ENCODE measurements at regions of chr20 and their contacts with region 1.

Region 1: GRCh38 chr20:36093025-36093803 is 61.3 kb upstream of the EPB41L1 start:
- DNase-seq: peak; percentile 77 to 83
- H3K4me3 ChIP-seq: peak overlapping the region; percentile 86
- H3K4me3 Mint-ChIP-seq: peak overlapping the region; percentile 93
- H3K27ac Mint-ChIP-seq: peak overlapping the region; percentile 82
- H3K4me1 ChIP-seq: peaks cover 60% of the 10 kb centered on the region
- H3K4me1 Mint-ChIP-seq: peaks cover 43% of the 10 kb centered on the region
- H3K27me3 ChIP-seq: no peaks in the 10 kb centered on the region
- H3K27me3 Mint-ChIP-seq: no peaks in the 10 kb centered on the region
- CTCF ChIP-seq: no peak

Region 2: DNA sequence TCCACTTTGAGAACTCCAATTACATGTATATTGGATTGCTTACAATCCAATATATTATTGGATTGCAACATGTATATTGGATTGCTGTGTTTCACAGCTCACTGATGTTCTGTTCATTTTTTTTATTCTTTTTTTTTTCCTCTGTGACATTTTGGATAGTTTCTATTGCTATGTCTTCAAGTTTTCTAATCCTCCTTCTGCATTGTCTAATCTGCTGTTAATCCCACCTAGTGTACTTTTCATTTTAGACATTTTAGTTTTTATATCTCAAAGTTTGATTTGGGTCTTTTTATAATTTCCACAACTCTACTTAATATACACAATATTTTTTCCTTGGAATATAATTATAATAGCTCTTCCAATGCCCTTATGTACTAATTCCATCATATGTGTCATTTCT is 90.4 kb before region 1 on chr20:
- CTCF ChIA-PET with region 1: no interaction called
- POLR2A ChIA-PET with region 1: no interaction called
- intact Hi-C with region 1: no loop called
- DNase-seq: no peak
- H3K4me3 ChIP-seq: no peak overlapping the region
- H3K4me3 Mint-ChIP-seq: no peak overlapping the region
- H3K27ac Mint-ChIP-seq: no peak overlapping the region
- H3K4me1 ChIP-seq: no peaks in the 10 kb centered on the region
- H3K4me1 Mint-ChIP-seq: no peaks in the 10 kb centered on the region
- H3K27me3 ChIP-seq: no peaks in the 10 kb centered on the region
- H3K27me3 Mint-ChIP-seq: no peaks in the 10 kb centered on the region
- CTCF ChIP-seq: no peak

Region 3: GRCh38 chr20:36030149-36030548 is 63.1 kb before region 1 on chr20:
- CTCF ChIA-PET with region 1: no interaction called
- POLR2A ChIA-PET with region 1: no interaction called
- intact Hi-C with region 1: loop called (anchors 5 kb)
- DNase-seq: no peak
- H3K4me3 ChIP-seq: no peak overlapping the region
- H3K4me3 Mint-ChIP-seq: no peak overlapping the region
- H3K27ac Mint-ChIP-seq: no peak overlapping the region
- H3K4me1 ChIP-seq: no peaks in the 10 kb centered on the region
- H3K4me1 Mint-ChIP-seq: peaks cover 13% of the 10 kb centered on the region
- H3K27me3 ChIP-seq: no peaks in the 10 kb centered on the region
- H3K27me3 Mint-ChIP-seq: no peaks in the 10 kb centered on the region
- CTCF ChIP-seq: no peak

Region 4: DNA sequence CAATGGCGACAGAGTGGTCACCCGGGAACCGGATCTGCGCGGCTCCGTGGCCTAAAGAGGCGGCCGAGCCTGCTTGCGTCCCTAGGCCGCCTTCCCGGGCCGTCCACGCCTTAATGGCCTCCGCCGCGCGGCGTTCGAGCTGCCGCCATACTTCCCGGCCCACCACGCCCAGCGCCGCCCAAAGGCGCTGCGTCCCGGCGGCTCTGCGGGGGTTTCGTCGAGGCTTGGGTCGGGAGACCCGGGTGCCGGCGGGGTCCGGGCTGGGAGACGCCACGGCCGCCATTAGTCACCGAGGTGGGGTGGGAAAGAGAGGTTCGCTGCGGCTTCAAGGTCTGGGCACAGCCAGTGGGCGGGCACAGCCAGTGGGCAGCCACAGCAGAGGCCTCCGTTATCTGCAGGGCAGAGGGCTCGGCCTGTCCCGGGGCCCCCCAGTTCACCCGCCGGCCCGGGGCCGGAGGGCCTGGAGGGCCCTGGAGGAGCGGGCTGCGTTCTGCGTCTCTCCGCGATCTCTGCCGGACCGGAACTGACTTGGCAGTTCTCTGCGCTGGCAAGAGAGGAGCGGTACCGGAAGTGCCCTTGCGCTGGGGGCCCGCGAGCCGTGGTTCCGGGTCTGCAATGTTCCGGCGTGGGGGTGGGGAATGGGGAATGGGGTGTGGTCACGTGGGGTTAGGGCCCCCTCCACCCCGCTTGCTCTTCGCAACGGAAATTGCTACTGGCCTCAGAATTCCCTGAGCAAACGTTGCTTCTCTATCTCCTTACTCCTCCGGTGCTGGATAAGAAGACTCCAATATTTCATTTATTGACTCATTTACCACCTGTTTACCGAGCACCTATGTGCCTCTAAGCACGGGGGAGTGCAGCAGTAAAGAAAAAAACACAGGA is 42.5 kb before region 1 on chr20:
- CTCF ChIA-PET with region 1: no interaction called
- POLR2A ChIA-PET with region 1: interaction called, 7 read pairs
- intact Hi-C with region 1: loop called (anchors 2 kb)
- DNase-seq: peak; percentile 99
- H3K4me3 ChIP-seq: peak overlapping the region; percentile 67
- H3K4me3 Mint-ChIP-seq: peak overlapping the region; percentile 69
- H3K27ac Mint-ChIP-seq: peak overlapping the region; percentile 88
- H3K4me1 ChIP-seq: peaks cover 34% of the 10 kb centered on the region
- H3K4me1 Mint-ChIP-seq: peaks cover 44% of the 10 kb centered on the region
- H3K27me3 ChIP-seq: no peaks in the 10 kb centered on the region
- H3K27me3 Mint-ChIP-seq: no peaks in the 10 kb centered on the region
- CTCF ChIP-seq: no peak

Region 5: GRCh38 chr20:36149469-36149868 is 56.3 kb after region 1 on chr20:
- CTCF ChIA-PET with region 1: no interaction called
- POLR2A ChIA-PET with region 1: no interaction called
- intact Hi-C with region 1: no loop called
- DNase-seq: no peak
- H3K4me3 ChIP-seq: no peak overlapping the region
- H3K4me3 Mint-ChIP-seq: no peak overlapping the region
- H3K27ac Mint-ChIP-seq: no peak overlapping the region
- H3K4me1 ChIP-seq: peaks cover 14% of the 10 kb centered on the region
- H3K4me1 Mint-ChIP-seq: peaks cover 6% of the 10 kb centered on the region
- H3K27me3 ChIP-seq: no peaks in the 10 kb centered on the region
- H3K27me3 Mint-ChIP-seq: no peaks in the 10 kb centered on the region
- CTCF ChIP-seq: no peak